ENCODE measurements at regions of chr22 and their contacts with region 1.

Region 1: GRCh38 chr22:42090596-42091454 is at the start of gene NDUFA6:
- DNase-seq: peak; percentile 99
- ATAC-seq: peak; percentile 98
- H3K4me3 Mint-ChIP-seq: peak within 1 kb of the TSS; percentile 98
- H3K27ac Mint-ChIP-seq: peak within 1 kb of the TSS; percentile 100
- H3K4me1 Mint-ChIP-seq: peaks cover 23% of the 10 kb centered on the region
- H3K27me3 Mint-ChIP-seq: no peaks in the 10 kb centered on the region
- total RNA-seq, gene NDUFA6: 90.7 to 102 TPM

Region 2: DNA sequence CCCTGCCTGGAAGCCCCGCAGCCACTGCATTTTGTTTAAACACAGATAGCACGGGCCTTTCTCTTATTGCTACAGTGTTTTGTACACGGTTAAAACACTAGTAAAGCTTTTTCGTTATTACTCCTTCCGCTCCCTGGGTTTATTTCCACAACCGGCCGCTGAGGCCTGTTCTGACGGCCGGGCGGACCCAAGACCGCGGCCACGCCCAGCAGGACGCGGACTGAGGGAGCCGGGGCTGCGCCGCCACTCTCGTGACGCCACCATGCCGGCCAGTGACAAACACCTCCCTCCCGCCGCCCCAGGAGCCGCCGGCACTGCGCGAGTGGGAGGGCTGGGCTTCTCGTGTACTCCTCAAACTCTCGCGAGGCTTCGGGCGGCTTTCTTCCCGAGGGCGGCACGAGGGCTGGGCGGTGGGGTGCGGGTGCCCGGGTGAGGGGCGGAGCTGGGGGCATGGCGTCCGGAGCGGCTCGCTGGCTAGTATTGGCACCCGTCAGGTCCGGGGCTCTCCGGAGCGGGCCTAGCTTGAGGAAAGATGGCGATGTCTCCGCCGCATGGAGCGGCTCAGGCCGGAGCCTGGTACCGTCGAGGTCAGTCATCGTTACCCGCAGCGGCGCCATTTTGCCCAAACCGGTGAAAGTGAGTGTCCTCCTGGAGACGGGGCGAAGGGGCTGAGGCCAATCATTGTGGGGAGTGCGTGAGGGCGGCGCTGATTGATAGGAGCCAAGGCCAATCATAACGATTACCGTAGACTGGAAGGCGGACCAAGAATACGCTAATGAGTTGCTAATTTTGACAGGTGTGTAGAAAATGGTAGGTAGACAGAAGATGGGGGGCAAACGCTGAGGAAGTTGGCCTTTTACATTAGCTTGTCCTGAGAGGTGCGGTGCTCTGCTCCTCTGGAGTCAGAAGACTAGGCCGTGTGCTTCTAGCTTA is 11.2 kb before region 1 on chr22 and contains the start of gene SMDT1:
- CTCF ChIA-PET with region 1: interaction called, 40 read pairs
- POLR2A ChIA-PET with region 1: interaction called, 95 read pairs
- DNase-seq: peak; percentile 99
- ATAC-seq: peak; percentile 95
- H3K4me3 Mint-ChIP-seq: peak within 1 kb of the TSS; percentile 92
- H3K27ac Mint-ChIP-seq: peak within 1 kb of the TSS; percentile 92
- H3K4me1 Mint-ChIP-seq: peaks cover 38% of the 10 kb centered on the region
- H3K27me3 Mint-ChIP-seq: no peaks in the 10 kb centered on the region
- total RNA-seq, gene SMDT1: 77.2 to 78.2 TPM

Region 3: DNA sequence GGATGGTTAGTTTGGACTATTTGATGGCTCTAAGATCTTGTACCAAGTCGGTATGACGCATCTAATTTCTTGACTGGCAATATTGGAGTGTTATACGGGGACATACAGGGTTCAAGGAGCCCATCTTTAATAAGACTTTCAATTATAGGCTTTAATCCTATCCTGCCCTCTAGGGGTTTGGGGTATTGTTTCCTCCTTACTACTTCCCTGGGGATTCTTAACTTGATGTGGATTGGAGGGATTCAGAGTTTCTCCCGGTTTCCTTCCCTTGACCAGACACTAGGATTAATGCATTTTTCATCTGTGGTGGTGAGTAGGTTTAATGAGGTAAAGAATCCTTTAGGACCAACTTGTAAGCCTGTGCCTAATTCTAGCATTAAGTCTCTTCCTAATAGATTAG is 21.0 kb after region 1 on chr22:
- CTCF ChIA-PET with region 1: interaction called, 24 read pairs
- POLR2A ChIA-PET with region 1: interaction called, 9 read pairs
- DNase-seq: no peak
- ATAC-seq: no peak
- H3K4me3 Mint-ChIP-seq: no peak overlapping the region
- H3K27ac Mint-ChIP-seq: no peak overlapping the region
- H3K4me1 Mint-ChIP-seq: peaks cover 2% of the 10 kb centered on the region
- H3K27me3 Mint-ChIP-seq: no peaks in the 10 kb centered on the region

Region 4: GRCh38 chr22:42437488-42438292 is 346.9 kb after region 1 on chr22:
- CTCF ChIA-PET with region 1: interaction called, 33 read pairs
- POLR2A ChIA-PET with region 1: interaction called, 21 read pairs
- DNase-seq: peak; percentile 89
- ATAC-seq: peak; percentile 96
- H3K4me3 Mint-ChIP-seq: peak overlapping the region; percentile 76
- H3K27ac Mint-ChIP-seq: peak overlapping the region; percentile 74
- H3K4me1 Mint-ChIP-seq: peaks cover 34% of the 10 kb centered on the region
- H3K27me3 Mint-ChIP-seq: peaks cover 4% of the 10 kb centered on the region

Measured in activated CD8-positive, alpha-beta T cell treated with anti-CD3 and anti-CD28 coated beads, Interleukin-2, amount 10 ng/mL, durations not matched to agents 7 days and 5 days (primary cell).